Activated CD8-positive, alpha-beta T cell treated with anti-CD3 and anti-CD28 coated beads for 36 hours (primary cell): ENCODE measurements at regions of chr11 and their contacts with region 1.

Region 1: DNA sequence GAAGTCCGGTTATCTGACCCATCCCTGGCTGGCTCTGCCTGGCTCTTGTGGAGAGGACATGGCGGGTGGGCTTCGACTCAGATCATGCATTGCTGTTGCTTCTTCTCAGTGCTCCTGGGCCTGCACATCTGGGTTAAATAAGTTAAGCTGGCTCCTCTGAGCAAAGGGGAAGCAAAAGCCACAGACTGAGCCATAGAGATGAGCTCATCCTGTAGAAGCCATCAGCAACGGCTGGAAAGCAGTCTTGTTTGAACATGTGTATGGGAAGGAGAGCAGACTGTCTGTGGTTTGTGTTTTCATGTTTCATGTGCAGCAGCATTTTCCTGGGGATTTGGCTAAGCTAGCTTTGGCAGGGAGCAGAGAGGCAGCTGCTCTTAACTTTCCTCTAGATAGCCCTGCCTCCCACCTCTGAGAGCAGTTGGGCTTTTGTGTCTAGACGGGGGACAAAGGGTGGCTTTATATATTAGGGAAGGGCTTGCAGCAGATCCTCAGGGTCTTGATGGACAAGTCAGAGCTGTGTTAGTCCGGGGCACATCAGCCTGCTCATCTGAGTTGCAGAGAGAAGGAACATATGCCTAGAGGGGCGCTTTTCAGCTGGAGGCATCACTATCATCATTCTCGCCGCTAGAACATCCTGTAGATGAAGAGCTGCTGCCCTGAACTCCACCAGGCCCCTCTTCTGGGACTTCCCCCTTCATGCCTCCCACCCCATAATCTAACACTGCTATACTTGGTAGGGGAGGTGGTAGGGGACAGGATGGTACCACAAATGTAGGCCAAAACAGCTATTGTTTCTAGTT is 14.9 kb downstream of the DCPS start:
- DNase-seq: peak; percentile 55
- ATAC-seq: peak; percentile 77
- H3K4me3 Mint-ChIP-seq: peak overlapping the region; percentile 61
- H3K27ac Mint-ChIP-seq: peak overlapping the region; percentile 87
- H3K4me1 Mint-ChIP-seq: peaks cover 32% of the 10 kb centered on the region
- H3K27me3 Mint-ChIP-seq: no peaks in the 10 kb centered on the region
- CTCF ChIP-seq: no peak

Region 2: GRCh38 chr11:126329644-126330211 is 11.0 kb after region 1 on chr11:
- CTCF ChIA-PET with region 1: interaction called, 5 read pairs
- POLR2A ChIA-PET with region 1: interaction called, 10 read pairs
- intact Hi-C with region 1: no loop called
- DNase-seq: peak; percentile 56
- ATAC-seq: peak; percentile 67
- H3K4me3 Mint-ChIP-seq: no peak overlapping the region
- H3K27ac Mint-ChIP-seq: peak overlapping the region; percentile 60
- H3K4me1 Mint-ChIP-seq: peaks cover 17% of the 10 kb centered on the region
- H3K27me3 Mint-ChIP-seq: no peaks in the 10 kb centered on the region
- CTCF ChIP-seq: no peak

Region 3: GRCh38 chr11:126336671-126337481 is 18.1 kb after region 1 on chr11:
- CTCF ChIA-PET with region 1: no interaction called
- POLR2A ChIA-PET with region 1: interaction called, 12 read pairs
- intact Hi-C with region 1: no loop called
- DNase-seq: no peak
- ATAC-seq: no peak
- H3K4me3 Mint-ChIP-seq: no peak overlapping the region
- H3K27ac Mint-ChIP-seq: peak overlapping the region; percentile 31
- H3K4me1 Mint-ChIP-seq: peaks cover 16% of the 10 kb centered on the region
- H3K27me3 Mint-ChIP-seq: no peaks in the 10 kb centered on the region
- CTCF ChIP-seq: no peak

Region 4: DNA sequence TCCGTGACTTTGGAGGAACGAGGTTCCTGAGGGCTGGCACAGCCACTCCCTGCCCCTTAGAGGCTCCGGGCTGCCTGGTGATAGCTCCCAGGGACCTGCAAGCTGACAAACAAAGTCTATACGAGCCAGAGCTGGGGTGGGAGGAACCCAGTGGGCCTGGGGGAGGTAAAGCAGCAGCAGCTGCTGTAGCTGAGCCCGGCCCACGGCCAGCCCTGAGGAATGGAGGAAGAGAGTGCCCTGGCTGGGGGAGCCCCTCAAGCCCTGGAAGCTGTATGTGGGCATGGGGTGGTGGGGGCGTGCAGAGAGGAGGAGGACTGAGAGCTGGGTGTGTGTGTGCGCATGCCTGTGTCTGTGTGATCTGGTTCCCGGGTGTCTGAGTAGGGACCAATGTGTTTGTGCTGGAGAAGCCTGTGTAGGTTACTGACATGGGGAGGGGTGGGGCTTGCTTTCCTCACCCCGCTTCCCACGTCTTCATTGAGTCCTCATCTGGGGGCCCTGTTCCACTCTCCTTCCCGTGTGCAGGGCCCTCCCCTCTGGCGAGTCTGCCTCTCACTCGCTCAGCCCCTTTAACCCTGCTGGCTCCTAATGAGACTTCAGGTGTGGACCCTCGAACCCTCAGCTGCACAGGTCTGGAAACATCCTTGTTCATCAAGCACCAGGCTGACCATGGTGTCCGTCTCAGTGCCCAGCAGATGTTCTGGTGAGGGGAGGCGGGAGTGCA is 47.5 kb after region 1 on chr11:
- CTCF ChIA-PET with region 1: no interaction called
- POLR2A ChIA-PET with region 1: no interaction called
- intact Hi-C with region 1: no loop called
- DNase-seq: no peak
- ATAC-seq: no peak
- H3K4me3 Mint-ChIP-seq: no peak overlapping the region
- H3K27ac Mint-ChIP-seq: no peak overlapping the region
- H3K4me1 Mint-ChIP-seq: peaks cover 2% of the 10 kb centered on the region
- H3K27me3 Mint-ChIP-seq: no peaks in the 10 kb centered on the region
- CTCF ChIP-seq: no peak